Panc1 (cell line): ENCODE measurements at regions of chr20 and their contacts with region 1.

Region 1: GRCh38 chr20:63895202-63895951 is 451 bp downstream of the DNAJC5 start:
- DNase-seq: no peak
- ATAC-seq: no peak; the same call in 1 of the 2 replicates
- H3K4me3 ChIP-seq: peak overlapping the region; percentile 72 to 76
- H3K27ac ChIP-seq: peak overlapping the region; percentile 91
- H3K4me1 ChIP-seq: peaks cover 19% of the 10 kb centered on the region
- H3K27me3 ChIP-seq: no peaks in the 10 kb centered on the region
- CTCF ChIP-seq: no peak

Region 2: GRCh38 chr20:63734946-63735858 is 160.2 kb before region 1 on chr20:
- CTCF ChIA-PET with region 1: no interaction called
- POLR2A ChIA-PET with region 1: interaction called, 10 read pairs
- in situ Hi-C with region 1: no loop called
- intact Hi-C with region 1: no loop called
- DNase-seq: no peak
- ATAC-seq: no peak
- H3K4me3 ChIP-seq: no peak overlapping the region
- H3K27ac ChIP-seq: no peak overlapping the region
- H3K4me1 ChIP-seq: peaks cover 32% of the 10 kb centered on the region
- H3K27me3 ChIP-seq: no peaks in the 10 kb centered on the region
- CTCF ChIP-seq: no peak

Region 3: DNA sequence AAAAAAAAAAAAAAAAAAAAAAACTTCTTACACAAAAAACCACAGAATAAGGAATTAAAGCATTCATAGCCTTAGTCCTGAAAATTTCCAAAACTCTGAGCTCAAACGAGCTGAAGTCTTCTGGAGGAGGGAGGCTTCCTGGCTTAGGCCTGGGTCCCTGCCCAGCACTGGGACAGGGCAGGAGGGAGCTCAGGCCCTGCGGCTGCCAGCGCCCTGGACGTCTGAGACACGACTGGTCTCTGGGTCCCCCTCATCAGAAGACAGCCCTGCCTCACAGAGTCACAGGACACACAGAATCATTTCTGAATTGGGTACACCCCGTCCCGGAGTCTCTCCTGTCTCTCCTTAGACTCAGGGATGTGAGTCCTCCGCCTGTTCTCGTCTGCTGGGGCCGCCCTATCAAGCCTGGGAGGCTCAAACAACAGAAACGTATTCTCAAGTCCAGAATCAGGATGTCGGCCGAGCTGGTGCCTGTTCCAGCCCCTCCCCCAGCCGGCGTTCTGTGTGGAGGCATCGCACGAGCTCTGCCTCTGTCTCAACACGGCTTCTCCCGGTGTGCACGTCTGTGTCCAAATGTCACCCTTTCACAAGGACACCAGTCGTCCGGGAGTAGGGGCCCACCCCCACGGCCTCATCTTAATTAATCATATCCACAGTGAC is 103.8 kb before region 1 on chr20:
- CTCF ChIA-PET with region 1: no interaction called
- POLR2A ChIA-PET with region 1: no interaction called
- in situ Hi-C with region 1: no loop called
- intact Hi-C with region 1: no loop called
- DNase-seq: no peak
- ATAC-seq: no peak
- H3K4me3 ChIP-seq: no peak overlapping the region
- H3K27ac ChIP-seq: no peak overlapping the region
- H3K4me1 ChIP-seq: no peaks in the 10 kb centered on the region
- H3K27me3 ChIP-seq: no peaks in the 10 kb centered on the region
- CTCF ChIP-seq: no peak

Region 4: DNA sequence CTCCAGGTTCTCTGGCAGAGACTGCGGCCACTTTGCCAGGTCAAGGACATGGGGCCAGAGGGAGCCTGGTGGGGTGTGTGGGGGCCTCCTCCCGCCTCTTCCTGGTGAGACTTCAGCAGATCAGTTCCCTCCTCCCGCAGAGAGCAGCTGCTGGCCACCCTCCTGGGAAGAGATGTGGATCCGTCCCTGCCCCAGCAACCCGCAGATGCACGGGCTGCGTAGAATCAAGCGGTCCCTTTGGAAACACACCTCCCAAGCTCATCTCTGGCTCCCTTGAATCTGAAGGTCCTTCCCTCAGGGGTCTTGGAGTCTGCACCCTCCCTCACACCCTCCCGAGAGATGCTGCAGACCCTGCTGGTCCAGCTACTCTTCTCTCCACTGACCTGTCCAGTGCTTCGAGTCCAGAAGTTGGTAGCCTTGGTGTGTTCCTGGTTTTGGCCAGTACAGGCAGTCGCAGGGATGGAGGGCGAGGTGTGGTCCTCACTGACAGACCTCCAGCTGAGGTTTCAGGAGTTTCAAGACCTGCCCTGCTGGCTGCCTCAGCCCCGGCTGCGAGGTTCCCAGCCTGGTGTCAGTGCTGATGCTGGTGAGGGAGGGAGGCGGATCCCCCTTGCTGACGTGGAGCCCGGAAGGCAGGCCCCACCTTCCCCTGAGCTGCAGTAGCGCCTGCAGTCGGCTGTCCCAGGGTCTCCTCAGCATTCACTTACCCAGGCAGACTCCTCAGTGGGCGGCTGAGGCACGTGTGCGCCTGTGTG is 211.8 kb after region 1 on chr20 and contains the start of gene NPBWR2:
- CTCF ChIA-PET with region 1: no interaction called
- POLR2A ChIA-PET with region 1: no interaction called
- in situ Hi-C with region 1: no loop called
- intact Hi-C with region 1: no loop called
- DNase-seq: no peak
- ATAC-seq: no peak
- H3K4me3 ChIP-seq: no peak within 1 kb of the TSS
- H3K27ac ChIP-seq: no peak within 1 kb of the TSS
- H3K4me1 ChIP-seq: no peaks in the 10 kb centered on the region; the same call in 1 of the 2 replicates
- H3K27me3 ChIP-seq: no peaks in the 10 kb centered on the region
- CTCF ChIP-seq: no peak
- total RNA-seq, gene NPBWR2: not detected